Esophagus muscularis mucosa (tissue), 4 donors: ENCODE measurements at regions of chr1 and their contacts with region 1.

Region 1: GRCh38 chr1:46223472-46223943 is 20.4 kb downstream of the LURAP1 start:
- DNase-seq: no peak
- H3K4me3 ChIP-seq: no peak overlapping the region
- H3K27ac ChIP-seq: no peak overlapping the region
- H3K4me1 ChIP-seq: peaks cover 8 to 11% (median 10%) of the 10 kb centered on the region in 4 donors
- H3K27me3 ChIP-seq: no peaks in the 10 kb centered on the region
- CTCF ChIP-seq: peak; percentile 86 to 92 (median 86)
- EP300 ChIP-seq: no peak
- POLR2A ChIP-seq: no peak

Region 2: GRCh38 chr1:46036894-46037839 is 186.3 kb before region 1 on chr1:
- intact Hi-C with region 1: loop called (anchors 5 kb)
- DNase-seq: peak; percentile 96
- H3K4me3 ChIP-seq: no peak overlapping the region
- H3K27ac ChIP-seq: peak overlapping the region in 3 of 4 donors; percentile 3 to 45 (median 11)
- H3K4me1 ChIP-seq: peaks cover 31 to 45% (median 38%) of the 10 kb centered on the region in 4 donors
- H3K27me3 ChIP-seq: no peaks in the 10 kb centered on the region
- CTCF ChIP-seq: peak; percentile 96 to 99 (median 98)
- EP300 ChIP-seq: no peak
- POLR2A ChIP-seq: no peak

Region 3: DNA sequence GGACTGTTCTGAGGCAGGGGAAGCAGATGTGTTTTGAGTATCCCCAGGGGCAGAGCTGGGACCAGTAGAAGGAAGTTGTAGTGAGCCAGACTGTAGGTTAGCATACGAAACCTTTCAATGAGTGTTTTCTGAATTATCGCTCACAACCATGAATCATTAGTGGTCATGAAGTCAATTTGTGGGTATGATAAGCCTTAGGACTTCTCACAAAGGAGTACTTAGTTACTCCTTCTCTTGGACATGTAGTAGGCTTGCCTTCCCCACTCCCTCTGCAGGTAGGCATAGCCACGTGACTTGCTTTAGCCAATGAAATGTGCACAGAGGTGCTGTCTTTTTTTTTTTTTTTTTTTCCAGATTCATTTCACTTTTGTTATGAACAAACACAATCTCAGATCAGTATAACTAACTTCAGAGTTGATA is 146.7 kb after region 1 on chr1:
- intact Hi-C with region 1: no loop called
- DNase-seq: no peak
- H3K4me3 ChIP-seq: no peak overlapping the region
- H3K27ac ChIP-seq: no peak overlapping the region
- H3K4me1 ChIP-seq: no peaks in the 10 kb centered on the region
- H3K27me3 ChIP-seq: no peaks in the 10 kb centered on the region
- CTCF ChIP-seq: no peak
- EP300 ChIP-seq: no peak
- POLR2A ChIP-seq: no peak